Dorsolateral prefrontal cortex (tissue), 120 donors: ENCODE measurements at regions of chr19 and their contacts with region 1.

Region 1: DNA sequence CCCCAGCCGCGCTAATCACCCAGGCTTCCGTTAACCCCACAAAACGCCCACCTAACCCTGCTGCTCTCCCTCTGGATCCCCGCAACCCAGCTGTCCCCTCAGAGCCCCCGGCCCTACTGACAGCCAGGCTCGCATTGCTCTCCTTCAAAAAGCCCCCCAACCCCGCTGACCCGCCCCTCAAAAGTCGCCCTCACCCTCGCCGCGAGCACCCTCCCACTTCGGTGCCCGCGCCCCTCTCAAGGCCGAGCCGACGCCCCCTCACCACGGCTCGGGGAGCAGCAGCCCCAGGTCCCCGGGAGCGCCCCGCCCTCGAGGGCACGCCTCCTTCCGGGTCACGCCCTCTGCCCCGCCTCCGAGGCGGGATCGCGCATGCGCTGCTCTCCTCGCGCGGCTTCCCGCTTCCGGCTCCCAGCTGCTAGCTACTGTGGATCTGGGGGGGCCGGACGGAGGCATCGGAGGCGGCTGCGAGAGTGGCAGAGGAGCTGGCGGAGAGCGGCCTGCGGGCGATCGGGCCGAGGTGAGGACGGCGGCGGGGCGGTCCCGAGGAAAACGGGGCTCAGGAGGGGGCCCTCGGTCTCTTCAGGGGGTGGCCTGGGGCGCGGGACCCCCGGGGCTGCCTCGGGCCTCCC is 46.1 kb downstream of the ARHGEF18 start:
- DNase-seq: peak; percentile 85 to 99 (median 92)
- H3K4me3 ChIP-seq: peak overlapping the region; percentile 77 to 100 (median 98)
- H3K27ac ChIP-seq: peak overlapping the region in 54 of 59 donors; percentile 20 to 92 (median 78)
- H3K27me3 ChIP-seq: no peaks in the 10 kb centered on the region
- CTCF ChIP-seq: peak in 19 of 56 donors; percentile 7 to 37 (median 18)

Region 2: GRCh38 chr19:7427944-7428343 is 33.1 kb after region 1 on chr19:
- intact Hi-C with region 1: no loop called
- DNase-seq: no peak
- H3K4me3 ChIP-seq: no peak overlapping the region
- H3K27ac ChIP-seq: no peak overlapping the region
- H3K27me3 ChIP-seq: no peaks in the 10 kb centered on the region
- CTCF ChIP-seq: no peak

Region 3: GRCh38 chr19:7442423-7442822 is 47.6 kb after region 1 on chr19:
- intact Hi-C with region 1: loop called in 1 of 2 experiments (anchors 5 kb)
- DNase-seq: peak in 6 of 10 donors; percentile 9 to 66 (median 46)
- H3K4me3 ChIP-seq: peak overlapping the region in 12 of 59 donors; percentile 5 to 46 (median 20)
- H3K27ac ChIP-seq: peak overlapping the region in 57 of 59 donors; percentile 17 to 96 (median 83)
- H3K27me3 ChIP-seq: no peaks in the 10 kb centered on the region
- CTCF ChIP-seq: no peak

Region 4: GRCh38 chr19:7460562-7460966 is 65.7 kb after region 1 on chr19:
- intact Hi-C with region 1: no loop called
- DNase-seq: no peak
- H3K4me3 ChIP-seq: no peak overlapping the region
- H3K27ac ChIP-seq: no peak overlapping the region
- H3K27me3 ChIP-seq: no peaks in the 10 kb centered on the region
- CTCF ChIP-seq: no peak

Region 5: GRCh38 chr19:7488736-7489353 is 94.0 kb after region 1 on chr19 and contains the start of gene PEX11G:
- intact Hi-C with region 1: loop called in 1 of 2 experiments (anchors 10 kb)
- DNase-seq: peak; percentile 83 to 95 (median 89)
- H3K4me3 ChIP-seq: peak within 1 kb of the TSS; percentile 41 to 96 (median 74)
- H3K27ac ChIP-seq: peak within 1 kb of the TSS; percentile 77 to 98 (median 94)
- H3K27me3 ChIP-seq: no peaks in the 10 kb centered on the region
- CTCF ChIP-seq: peak in 10 of 56 donors; percentile 9 to 49 (median 25)
- total RNA-seq, gene PEX11G: 0.77 to 8.8 (median 3.2) TPM

Region 6: GRCh38 chr19:7522072-7522922 is 127.5 kb after region 1 on chr19 and contains the start of gene MCOLN1:
- intact Hi-C with region 1: loop called in 1 of 2 experiments (anchors 5 kb)
- DNase-seq: peak; percentile 96 to 99 (median 98)
- H3K4me3 ChIP-seq: peak within 1 kb of the TSS; percentile 65 to 98 (median 88)
- H3K27ac ChIP-seq: peak within 1 kb of the TSS; percentile 30 to 96 (median 89)
- H3K27me3 ChIP-seq: no peaks in the 10 kb centered on the region
- CTCF ChIP-seq: peak in 34 of 56 donors; percentile 9 to 60 (median 26)
- total RNA-seq, gene MCOLN1: 21.1 to 64.6 (median 33.5) TPM

Region 7: GRCh38 chr19:7535035-7535992 is 140.5 kb after region 1 on chr19 and contains the start of gene PNPLA6:
- intact Hi-C with region 1: loop called (anchors 1 to 5 kb)
- DNase-seq: peak; percentile 94 to 99 (median 97)
- H3K4me3 ChIP-seq: peak within 1 kb of the TSS; percentile 69 to 99 (median 94)
- H3K27ac ChIP-seq: peak within 1 kb of the TSS; percentile 79 to 100 (median 97)
- H3K27me3 ChIP-seq: no peaks in the 10 kb centered on the region
- CTCF ChIP-seq: peak in 28 of 56 donors; percentile 0 to 49 (median 26)
- total RNA-seq, gene PNPLA6: 131 to 340 (median 192) TPM

Region 8: GRCh38 chr19:7540761-7541491 is 146.1 kb after region 1 on chr19:
- intact Hi-C with region 1: loop called in 1 of 2 experiments (anchors 5 kb)
- DNase-seq: no peak
- H3K4me3 ChIP-seq: no peak overlapping the region
- H3K27ac ChIP-seq: no peak overlapping the region
- H3K27me3 ChIP-seq: no peaks in the 10 kb centered on the region
- CTCF ChIP-seq: no peak

Region 9: DNA sequence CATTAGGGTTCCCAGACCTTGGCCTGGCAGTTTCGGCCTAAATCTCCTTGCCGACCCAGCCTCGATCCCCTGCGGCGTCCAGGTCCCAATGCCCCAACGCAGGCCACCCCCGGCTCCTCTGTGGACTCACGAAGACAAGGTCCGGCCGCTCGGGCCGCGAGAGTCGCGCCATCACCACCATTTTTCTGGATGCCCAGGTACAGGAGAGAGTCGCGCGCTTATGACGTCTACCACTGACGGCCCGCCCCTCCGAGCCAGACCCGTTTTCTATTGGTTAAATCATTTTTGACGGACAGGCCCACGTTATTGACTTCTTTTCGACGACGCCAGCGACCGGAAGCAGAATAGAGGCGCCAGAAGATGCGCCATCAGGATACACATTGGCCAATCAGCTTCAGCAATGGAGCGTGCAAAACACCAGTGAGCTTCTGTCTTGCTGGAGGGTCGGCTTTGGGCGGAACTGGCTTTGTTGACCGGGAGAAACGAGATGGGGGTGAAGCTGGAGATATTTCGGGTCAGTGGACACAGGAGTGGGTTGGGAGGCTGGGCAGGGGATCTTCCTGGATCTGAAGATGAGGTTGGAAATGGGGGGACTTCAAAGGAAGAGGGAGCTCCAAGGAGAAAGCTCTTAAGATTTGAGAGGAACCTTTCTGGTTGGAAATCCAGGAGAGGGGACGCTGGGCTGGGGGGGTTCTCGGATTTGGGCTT is 234.7 kb after region 1 on chr19 and contains the starts of genes PET100 and XAB2:
- intact Hi-C with region 1: loop called in 1 of 2 experiments (anchors 5 kb)
- DNase-seq: peak; percentile 95 to 99 (median 98)
- H3K4me3 ChIP-seq: peak within 1 kb of the TSS; percentile 71 to 100 (median 92)
- H3K27ac ChIP-seq: peak within 1 kb of the TSS in 49 of 59 donors; percentile 15 to 90 (median 72)
- H3K27me3 ChIP-seq: no peaks in the 10 kb centered on the region
- CTCF ChIP-seq: peak in 17 of 56 donors; percentile 8 to 56 (median 25)
- total RNA-seq, gene PET100: 33.4 to 159 (median 92.2) TPM
- total RNA-seq, gene XAB2: 30.8 to 56.2 (median 38.7) TPM